ENCODE measurements at regions of chr11 and their contacts with region 1.

Region 1: GRCh38 chr11:63871962-63872799 is 33.3 kb downstream of the MARK2 start:
- DNase-seq: peak in 2 of 5 donors; percentile 20 to 34
- H3K4me3 ChIP-seq: peak overlapping the region; percentile 34
- H3K4me3 Mint-ChIP-seq: peak overlapping the region in 6 of 7 donors; percentile 31 to 73 (median 56)
- H3K27ac ChIP-seq: peak overlapping the region; percentile 12
- H3K27ac Mint-ChIP-seq: peak overlapping the region in 7 of 8 donors; percentile 57 to 92 (median 75)
- H3K4me1 ChIP-seq: peaks cover 76% of the 10 kb centered on the region
- H3K4me1 Mint-ChIP-seq: peaks cover 73 to 91% (median 73%) of the 10 kb centered on the region in 3 donors
- H3K27me3 ChIP-seq: no peaks in the 10 kb centered on the region
- H3K27me3 Mint-ChIP-seq: no peaks in the 10 kb centered on the region

Region 2: GRCh38 chr11:63737718-63738117 is 134.5 kb before region 1 on chr11:
- CTCF ChIA-PET with region 1: no interaction called
- POLR2A ChIA-PET with region 1: no interaction called
- DNase-seq: no peak
- H3K4me3 ChIP-seq: no peak overlapping the region
- H3K4me3 Mint-ChIP-seq: no peak overlapping the region
- H3K27ac ChIP-seq: no peak overlapping the region
- H3K27ac Mint-ChIP-seq: peak overlapping the region in 5 of 8 donors; percentile 6 to 73 (median 48)
- H3K4me1 ChIP-seq: no peaks in the 10 kb centered on the region
- H3K4me1 Mint-ChIP-seq: peaks cover 2 to 4% (median 3%) of the 10 kb centered on the region in 3 donors
- H3K27me3 ChIP-seq: no peaks in the 10 kb centered on the region
- H3K27me3 Mint-ChIP-seq: no peaks in the 10 kb centered on the region

Region 3: DNA sequence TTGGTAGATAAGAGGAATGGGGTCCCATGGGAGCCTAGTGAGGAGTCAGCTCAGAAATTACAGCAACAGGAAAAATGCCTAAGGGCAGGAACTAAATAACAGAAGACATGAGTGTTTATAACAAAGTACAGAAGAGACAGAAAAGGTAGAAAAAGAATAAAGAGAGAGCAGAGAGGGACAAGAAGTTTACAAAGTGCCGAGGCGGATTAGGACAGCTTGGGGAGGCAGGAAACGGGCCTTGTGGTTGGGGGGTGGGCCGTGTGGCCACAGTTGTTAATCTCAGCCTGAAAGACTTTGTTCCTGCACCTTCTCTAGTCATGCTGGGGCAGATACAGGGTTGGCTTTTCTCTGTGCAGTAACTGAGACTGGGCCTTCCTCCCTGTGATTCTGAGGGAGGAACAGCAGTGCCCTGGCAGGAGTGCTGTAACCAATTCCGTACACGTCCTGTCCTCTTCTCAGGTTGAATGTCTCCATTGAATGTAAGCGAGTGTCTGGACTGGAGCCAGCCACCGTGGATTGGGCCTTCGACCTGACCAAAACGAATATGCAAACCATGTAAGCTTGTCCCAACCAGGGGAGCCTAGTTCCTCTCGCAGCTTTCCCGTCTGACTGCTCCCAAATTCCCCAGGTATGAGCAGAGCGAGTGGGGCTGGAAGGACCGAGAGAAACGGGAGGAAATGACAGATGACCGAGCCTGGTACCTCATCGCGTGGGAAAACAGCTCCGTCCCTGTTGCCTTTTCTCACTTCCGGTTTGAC is 79.8 kb after region 1 on chr11:
- CTCF ChIA-PET with region 1: no interaction called
- POLR2A ChIA-PET with region 1: interaction called, 11 read pairs
- DNase-seq: peak in 4 of 5 donors; percentile 11 to 66 (median 32)
- H3K4me3 ChIP-seq: peak overlapping the region; percentile 13
- H3K4me3 Mint-ChIP-seq: peak overlapping the region; percentile 19 to 89 (median 68)
- H3K27ac ChIP-seq: no peak overlapping the region
- H3K27ac Mint-ChIP-seq: peak overlapping the region; percentile 68 to 92 (median 86)
- H3K4me1 ChIP-seq: peaks cover 35% of the 10 kb centered on the region
- H3K4me1 Mint-ChIP-seq: peaks cover 30 to 46% (median 33%) of the 10 kb centered on the region in 3 donors
- H3K27me3 ChIP-seq: no peaks in the 10 kb centered on the region
- H3K27me3 Mint-ChIP-seq: peaks cover 0 to 2% of the 10 kb centered on the region in 2 donors

Region 4: DNA sequence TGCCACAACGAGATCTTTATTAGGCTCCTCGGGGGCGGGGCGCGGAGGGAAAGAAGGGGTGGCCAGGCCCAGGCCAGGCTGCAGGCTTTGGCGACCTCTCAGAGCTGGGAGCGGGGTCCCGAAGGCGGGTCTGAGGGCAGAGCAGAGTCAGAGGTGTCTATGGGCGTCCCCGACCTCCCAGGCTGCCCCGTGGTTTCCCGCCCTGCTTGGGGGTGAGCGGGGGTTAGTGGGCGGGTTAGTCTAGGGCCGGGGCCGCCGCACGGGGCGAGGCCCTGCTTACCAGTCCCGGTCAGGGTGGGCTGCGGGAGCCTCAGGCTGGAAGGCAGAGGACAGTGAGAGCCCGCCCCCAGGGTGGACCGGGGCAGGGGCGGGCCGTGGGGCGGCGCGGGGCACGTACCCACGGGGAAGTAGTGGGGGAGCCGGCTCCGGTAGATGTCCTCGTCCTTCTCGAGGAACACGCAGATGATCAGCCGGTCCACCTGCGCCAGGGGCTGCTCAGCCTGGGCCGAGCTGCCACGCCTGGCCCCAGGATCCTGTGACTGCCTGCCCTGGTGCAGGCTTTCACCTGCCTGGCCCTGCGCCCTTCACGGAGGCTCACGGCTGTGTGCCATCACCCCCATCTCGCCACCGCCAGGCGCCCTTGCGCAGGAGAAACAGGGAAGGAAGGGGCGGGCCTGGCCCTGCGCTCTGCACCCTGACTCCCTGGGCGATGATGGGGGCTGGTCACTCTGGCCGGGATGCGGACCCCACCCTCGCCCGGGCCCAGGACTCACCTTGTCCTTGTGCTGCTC is 126.6 kb after region 1 on chr11:
- CTCF ChIA-PET with region 1: no interaction called
- POLR2A ChIA-PET with region 1: no interaction called
- DNase-seq: no peak
- H3K4me3 ChIP-seq: no peak overlapping the region
- H3K4me3 Mint-ChIP-seq: peak overlapping the region in 1 of 7 donors; percentile 56
- H3K27ac ChIP-seq: no peak overlapping the region
- H3K27ac Mint-ChIP-seq: peak overlapping the region in 1 of 8 donors; percentile 26
- H3K4me1 ChIP-seq: peaks cover 7% of the 10 kb centered on the region
- H3K4me1 Mint-ChIP-seq: peaks cover 0 to 28% (median 4%) of the 10 kb centered on the region in 3 donors
- H3K27me3 ChIP-seq: no peaks in the 10 kb centered on the region
- H3K27me3 Mint-ChIP-seq: no peaks in the 10 kb centered on the region

Measured in CD8-positive, alpha-beta memory T cell (primary cell).